Right lobe of liver (tissue), 6 donors: ENCODE measurements at regions of chr11 and their contacts with region 1.

Region 1: GRCh38 chr11:118497831-118498230 is 29.4 kb upstream of the TTC36 start:
- DNase-seq: no peak
- ATAC-seq: no peak
- H3K4me3 ChIP-seq: no peak overlapping the region
- H3K27ac ChIP-seq: no peak overlapping the region
- H3K4me1 ChIP-seq: no peaks in the 10 kb centered on the region
- H3K27me3 ChIP-seq: no peaks in the 10 kb centered on the region
- CTCF ChIP-seq: no peak
- POLR2A ChIP-seq: no peak

Region 2: GRCh38 chr11:118374729-118375128 is 123.1 kb before region 1 on chr11:
- intact Hi-C with region 1: loop called in 1 of 2 experiments (anchors 10 kb)
- DNase-seq: no peak
- ATAC-seq: no peak
- H3K4me3 ChIP-seq: no peak overlapping the region
- H3K27ac ChIP-seq: no peak overlapping the region
- H3K4me1 ChIP-seq: no peaks in the 10 kb centered on the region
- H3K27me3 ChIP-seq: no peaks in the 10 kb centered on the region
- CTCF ChIP-seq: no peak
- POLR2A ChIP-seq: no peak